CD8-positive, alpha-beta T cell (primary cell): ENCODE measurements at regions of chr15 and their contacts with region 1.

Region 1: DNA sequence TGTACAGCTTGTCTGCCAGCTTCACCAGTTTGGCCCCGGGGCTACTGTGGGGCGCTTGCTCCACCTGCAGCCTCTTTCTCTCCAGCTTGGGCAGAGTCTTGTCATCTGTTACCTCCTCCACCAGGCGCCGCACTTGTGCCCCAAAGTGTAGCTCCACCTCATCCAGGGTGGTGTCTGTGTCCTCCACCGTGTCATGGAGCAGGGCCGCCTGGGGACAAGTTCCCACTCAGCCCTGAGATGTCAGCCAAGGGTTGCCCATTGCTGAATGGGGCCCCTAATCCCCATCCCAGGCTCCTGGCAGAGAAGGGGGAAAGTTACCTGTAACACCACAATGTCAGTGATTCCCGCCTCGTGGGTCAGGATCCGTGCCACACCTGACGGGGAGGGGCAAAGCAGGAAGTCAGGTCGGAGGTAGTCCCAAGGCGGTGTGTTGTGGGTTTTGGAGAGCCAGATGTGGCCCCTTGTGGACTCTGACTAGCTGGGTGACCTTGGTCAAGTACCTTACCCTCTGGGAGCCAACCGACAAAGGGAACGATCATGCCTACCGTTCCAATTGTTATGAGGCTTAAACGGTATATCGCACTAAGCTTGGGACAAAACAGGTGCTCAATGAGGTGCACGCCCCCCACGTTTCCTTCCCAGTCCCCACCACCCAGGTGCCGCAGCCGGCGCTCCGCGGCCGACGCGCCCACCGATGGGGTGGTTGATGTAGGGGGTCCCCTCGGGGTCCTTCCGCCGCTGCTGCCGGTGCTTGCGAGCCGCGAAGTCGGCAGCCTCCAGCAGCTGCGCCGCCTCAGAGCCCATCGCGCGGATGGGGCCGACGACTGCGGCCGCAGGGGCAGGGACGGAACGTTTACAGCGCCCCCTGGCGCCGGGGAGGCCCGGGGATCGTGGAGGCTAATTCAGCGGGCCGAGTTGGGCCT is at the start of gene HDDC3:
- DNase-seq: peak; percentile 75 to 95 (median 90)
- ATAC-seq: peak; percentile 58
- H3K4me3 ChIP-seq: peak within 1 kb of the TSS; percentile 89 to 95
- H3K4me3 Mint-ChIP-seq: peak within 1 kb of the TSS; percentile 99
- H3K27ac ChIP-seq: peak within 1 kb of the TSS; percentile 78 to 87
- H3K27ac Mint-ChIP-seq: peak within 1 kb of the TSS; percentile 99
- H3K4me1 ChIP-seq: peaks cover 55% of the 10 kb centered on the region
- H3K4me1 Mint-ChIP-seq: peaks cover 49% of the 10 kb centered on the region
- H3K27me3 ChIP-seq: no peaks in the 10 kb centered on the region
- H3K27me3 Mint-ChIP-seq: no peaks in the 10 kb centered on the region
- CTCF ChIP-seq: peak; percentile 96
- total RNA-seq, gene HDDC3: 5.1 to 6.0 TPM

Region 2: DNA sequence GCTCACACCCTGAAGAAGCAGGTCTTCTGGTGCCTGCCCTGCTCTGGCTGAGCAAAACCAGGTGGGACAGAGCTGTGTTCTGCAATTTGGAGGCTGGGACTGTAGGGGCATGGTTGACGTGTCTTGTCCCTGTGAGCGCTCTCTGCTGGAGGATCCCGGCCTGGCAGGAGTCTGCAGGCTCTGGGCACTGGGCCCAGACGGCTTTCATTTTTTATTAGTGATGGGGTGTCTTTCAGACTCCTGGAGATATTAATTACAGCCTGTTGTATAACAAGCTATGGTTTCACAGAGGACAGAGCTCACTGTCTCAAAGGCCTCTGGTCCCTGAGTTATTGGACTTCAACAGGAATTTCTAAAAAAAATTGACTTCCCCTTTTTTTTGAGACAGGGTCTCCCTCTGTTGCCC is 960.4 kb before region 1 on chr15:
- CTCF ChIA-PET with region 1: no interaction called
- POLR2A ChIA-PET with region 1: no interaction called
- intact Hi-C with region 1: no loop called
- DNase-seq: peak; percentile 2 to 62 (median 31)
- ATAC-seq: peak; percentile 54
- H3K4me3 ChIP-seq: no peak overlapping the region
- H3K4me3 Mint-ChIP-seq: no peak overlapping the region
- H3K27ac ChIP-seq: no peak overlapping the region
- H3K27ac Mint-ChIP-seq: no peak overlapping the region
- H3K4me1 ChIP-seq: no peaks in the 10 kb centered on the region
- H3K4me1 Mint-ChIP-seq: no peaks in the 10 kb centered on the region
- H3K27me3 ChIP-seq: no peaks in the 10 kb centered on the region
- H3K27me3 Mint-ChIP-seq: no peaks in the 10 kb centered on the region
- CTCF ChIP-seq: peak; percentile 41

Region 3: GRCh38 chr15:90101969-90102890 is 829.8 kb before region 1 on chr15 and contains the start of gene IDH2:
- CTCF ChIA-PET with region 1: interaction called, 3 read pairs
- POLR2A ChIA-PET with region 1: interaction called, 5 read pairs
- intact Hi-C with region 1: loop called (anchors 5 to 10 kb)
- DNase-seq: peak; percentile 26 to 89 (median 68)
- ATAC-seq: peak; percentile 68
- H3K4me3 ChIP-seq: peak within 1 kb of the TSS; percentile 69 to 81
- H3K4me3 Mint-ChIP-seq: peak within 1 kb of the TSS; percentile 91
- H3K27ac ChIP-seq: peak within 1 kb of the TSS; percentile 81 to 87
- H3K27ac Mint-ChIP-seq: peak within 1 kb of the TSS; percentile 100
- H3K4me1 ChIP-seq: peaks cover 41% of the 10 kb centered on the region
- H3K4me1 Mint-ChIP-seq: peaks cover 53% of the 10 kb centered on the region
- H3K27me3 ChIP-seq: no peaks in the 10 kb centered on the region
- H3K27me3 Mint-ChIP-seq: peaks cover 3% of the 10 kb centered on the region
- CTCF ChIP-seq: no peak
- total RNA-seq, gene IDH2: 41.5 to 42.2 TPM

Region 4: GRCh38 chr15:90286678-90287077 is 645.3 kb before region 1 on chr15:
- CTCF ChIA-PET with region 1: no interaction called
- POLR2A ChIA-PET with region 1: no interaction called
- intact Hi-C with region 1: no loop called
- DNase-seq: peak in 6 of 9 experiments; percentile 24 to 77 (median 55)
- ATAC-seq: peak; percentile 94
- H3K4me3 ChIP-seq: no peak overlapping the region
- H3K4me3 Mint-ChIP-seq: no peak overlapping the region
- H3K27ac ChIP-seq: no peak overlapping the region
- H3K27ac Mint-ChIP-seq: no peak overlapping the region
- H3K4me1 ChIP-seq: no peaks in the 10 kb centered on the region
- H3K4me1 Mint-ChIP-seq: no peaks in the 10 kb centered on the region
- H3K27me3 ChIP-seq: no peaks in the 10 kb centered on the region
- H3K27me3 Mint-ChIP-seq: no peaks in the 10 kb centered on the region
- CTCF ChIP-seq: peak; percentile 78

Region 5: GRCh38 chr15:90387537-90388461 is 544.2 kb before region 1 on chr15 and contains the start of gene IQGAP1:
- CTCF ChIA-PET with region 1: no interaction called
- POLR2A ChIA-PET with region 1: interaction called, 3 read pairs
- intact Hi-C with region 1: loop called in 1 of 2 experiments (anchors 2 kb)
- DNase-seq: peak; percentile 92 to 97 (median 95)
- ATAC-seq: peak; percentile 91
- H3K4me3 ChIP-seq: peak within 1 kb of the TSS; percentile 90 to 94
- H3K4me3 Mint-ChIP-seq: peak within 1 kb of the TSS; percentile 90
- H3K27ac ChIP-seq: peak within 1 kb of the TSS; percentile 86 to 90
- H3K27ac Mint-ChIP-seq: peak within 1 kb of the TSS; percentile 96
- H3K4me1 ChIP-seq: peaks cover 44% of the 10 kb centered on the region
- H3K4me1 Mint-ChIP-seq: peaks cover 45% of the 10 kb centered on the region
- H3K27me3 ChIP-seq: no peaks in the 10 kb centered on the region
- H3K27me3 Mint-ChIP-seq: no peaks in the 10 kb centered on the region
- CTCF ChIP-seq: no peak
- total RNA-seq, gene IQGAP1: 57.4 to 69.5 TPM

Region 6: GRCh38 chr15:90716976-90717821 is 214.8 kb before region 1 on chr15 and contains the start of gene BLM:
- CTCF ChIA-PET with region 1: interaction called, 3 read pairs
- POLR2A ChIA-PET with region 1: interaction called, 4 read pairs
- intact Hi-C with region 1: loop called in 1 of 2 experiments (anchors 1 kb)
- DNase-seq: peak; percentile 89 to 98 (median 93)
- ATAC-seq: peak; percentile 99
- H3K4me3 ChIP-seq: peak within 1 kb of the TSS; percentile 82 to 95
- H3K4me3 Mint-ChIP-seq: peak within 1 kb of the TSS; percentile 95
- H3K27ac ChIP-seq: peak within 1 kb of the TSS; percentile 78 to 95
- H3K27ac Mint-ChIP-seq: peak within 1 kb of the TSS; percentile 91
- H3K4me1 ChIP-seq: peaks cover 12% of the 10 kb centered on the region
- H3K4me1 Mint-ChIP-seq: peaks cover 31% of the 10 kb centered on the region
- H3K27me3 ChIP-seq: no peaks in the 10 kb centered on the region
- H3K27me3 Mint-ChIP-seq: no peaks in the 10 kb centered on the region
- CTCF ChIP-seq: peak; percentile 21
- total RNA-seq, gene BLM: 2.5 to 2.6 TPM

Region 7: DNA sequence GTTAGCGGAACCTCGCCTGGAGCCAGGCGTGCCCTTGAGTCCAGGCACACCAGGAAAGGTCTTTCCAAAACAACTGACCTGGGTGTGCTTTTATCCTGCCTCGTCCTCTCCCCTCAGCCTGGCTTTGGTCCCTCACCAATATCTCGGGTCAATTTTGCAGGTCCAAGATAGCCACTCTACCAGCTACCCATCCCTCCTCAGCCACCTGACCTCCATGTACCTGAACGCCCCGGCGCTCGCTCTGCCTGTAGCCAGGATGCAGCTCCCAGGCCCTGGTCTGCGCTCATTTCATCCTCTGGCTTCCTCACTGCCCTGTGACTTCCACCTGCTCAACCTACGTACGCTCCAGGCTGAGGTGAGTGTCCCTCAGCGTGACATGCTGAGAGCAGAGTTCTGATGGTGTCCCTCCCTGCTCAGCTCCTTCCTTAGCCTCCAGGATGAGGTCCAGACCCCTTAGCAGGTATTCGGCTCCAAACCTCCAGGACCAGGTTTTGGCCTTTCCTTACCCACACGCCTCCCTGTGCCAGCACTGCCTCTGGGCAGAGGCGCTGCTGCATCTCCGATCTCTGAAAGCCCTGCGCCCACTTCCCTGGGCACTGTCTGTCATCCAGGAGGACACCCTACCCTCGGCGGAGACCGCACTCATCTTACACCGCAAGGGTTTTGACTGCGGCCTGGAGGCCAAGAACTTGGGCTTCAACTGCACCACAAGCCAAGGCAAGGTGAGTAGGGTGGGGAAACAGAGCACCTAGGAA is 13.8 kb before region 1 on chr15:
- CTCF ChIA-PET with region 1: interaction called, 262 read pairs
- POLR2A ChIA-PET with region 1: interaction called, 5 read pairs
- intact Hi-C with region 1: no loop called
- DNase-seq: no peak
- ATAC-seq: no peak
- H3K4me3 ChIP-seq: no peak overlapping the region
- H3K4me3 Mint-ChIP-seq: no peak overlapping the region
- H3K27ac ChIP-seq: no peak overlapping the region
- H3K27ac Mint-ChIP-seq: no peak overlapping the region
- H3K4me1 ChIP-seq: no peaks in the 10 kb centered on the region
- H3K4me1 Mint-ChIP-seq: no peaks in the 10 kb centered on the region
- H3K27me3 ChIP-seq: no peaks in the 10 kb centered on the region
- H3K27me3 Mint-ChIP-seq: no peaks in the 10 kb centered on the region
- CTCF ChIP-seq: no peak

Region 8: GRCh38 chr15:90994417-90995311 is 62.7 kb after region 1 on chr15 and contains the start of gene PRC1:
- CTCF ChIA-PET with region 1: interaction called, 4 read pairs
- POLR2A ChIA-PET with region 1: no interaction called
- intact Hi-C with region 1: loop called (anchors 1 kb)
- DNase-seq: peak; percentile 92 to 99 (median 97)
- ATAC-seq: peak; percentile 96
- H3K4me3 ChIP-seq: peak within 1 kb of the TSS; percentile 78 to 95
- H3K4me3 Mint-ChIP-seq: peak within 1 kb of the TSS; percentile 99
- H3K27ac ChIP-seq: peak within 1 kb of the TSS; percentile 81 to 94
- H3K27ac Mint-ChIP-seq: peak within 1 kb of the TSS; percentile 97
- H3K4me1 ChIP-seq: peaks cover 13% of the 10 kb centered on the region
- H3K4me1 Mint-ChIP-seq: peaks cover 19% of the 10 kb centered on the region
- H3K27me3 ChIP-seq: no peaks in the 10 kb centered on the region
- H3K27me3 Mint-ChIP-seq: no peaks in the 10 kb centered on the region
- CTCF ChIP-seq: no peak
- total RNA-seq, gene PRC1: 24.6 to 31.3 TPM

Region 9: DNA sequence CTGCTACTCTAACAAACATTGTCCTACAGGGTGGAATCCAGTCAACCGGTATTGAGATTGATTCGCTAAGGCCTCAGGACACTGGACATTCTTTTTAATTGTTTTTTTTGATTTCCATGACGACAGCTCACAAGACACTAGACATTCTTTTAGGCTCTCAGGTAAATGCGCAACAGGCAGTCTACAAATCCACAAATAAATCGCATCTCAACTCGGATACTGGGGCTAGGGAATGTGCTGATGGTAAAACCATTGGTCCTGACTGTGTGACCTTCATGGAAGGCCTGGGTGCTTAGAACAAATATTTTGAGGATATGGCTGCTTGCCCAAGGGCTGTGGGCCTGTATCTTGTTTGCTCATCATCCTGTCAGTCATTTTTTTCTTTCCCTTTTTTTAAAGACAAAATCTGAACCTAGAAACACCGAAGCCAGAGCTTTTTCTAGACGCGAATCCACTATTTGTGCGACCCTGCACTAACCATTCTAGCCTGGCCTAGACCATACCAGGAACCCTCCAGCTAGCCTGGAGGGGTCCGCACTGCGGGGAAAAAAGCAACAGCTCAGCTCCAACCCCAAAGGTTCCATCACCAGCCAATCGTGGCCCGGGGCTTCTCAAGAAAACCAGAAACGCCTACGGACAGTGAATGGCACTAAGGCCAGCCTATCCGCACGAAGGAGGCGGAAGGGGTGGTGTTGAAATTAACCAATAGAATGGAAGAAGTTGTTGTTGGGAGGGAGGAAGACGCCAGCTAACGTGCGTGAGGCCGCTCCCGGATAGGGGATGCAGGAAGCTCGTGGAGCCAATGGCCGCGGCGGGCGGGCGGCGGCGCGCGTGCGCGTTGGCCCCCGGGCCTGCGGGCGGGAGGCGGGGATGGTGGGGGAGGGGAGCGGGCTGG is 1950.1 kb after region 1 on chr15:
- CTCF ChIA-PET with region 1: no interaction called
- POLR2A ChIA-PET with region 1: no interaction called
- intact Hi-C with region 1: loop called in 1 of 2 experiments (anchors 10 kb)
- DNase-seq: peak; percentile 97 to 99 (median 98)
- ATAC-seq: peak; percentile 83
- H3K4me3 ChIP-seq: peak overlapping the region; percentile 51 to 52
- H3K4me3 Mint-ChIP-seq: peak overlapping the region; percentile 87
- H3K27ac ChIP-seq: peak overlapping the region; percentile 80 to 84
- H3K27ac Mint-ChIP-seq: peak overlapping the region; percentile 99
- H3K4me1 ChIP-seq: peaks cover 49% of the 10 kb centered on the region
- H3K4me1 Mint-ChIP-seq: peaks cover 66% of the 10 kb centered on the region
- H3K27me3 ChIP-seq: no peaks in the 10 kb centered on the region
- H3K27me3 Mint-ChIP-seq: no peaks in the 10 kb centered on the region
- CTCF ChIP-seq: no peak